ENCODE measurements at regions of chr12 and their contacts with region 1.

Region 1: DNA sequence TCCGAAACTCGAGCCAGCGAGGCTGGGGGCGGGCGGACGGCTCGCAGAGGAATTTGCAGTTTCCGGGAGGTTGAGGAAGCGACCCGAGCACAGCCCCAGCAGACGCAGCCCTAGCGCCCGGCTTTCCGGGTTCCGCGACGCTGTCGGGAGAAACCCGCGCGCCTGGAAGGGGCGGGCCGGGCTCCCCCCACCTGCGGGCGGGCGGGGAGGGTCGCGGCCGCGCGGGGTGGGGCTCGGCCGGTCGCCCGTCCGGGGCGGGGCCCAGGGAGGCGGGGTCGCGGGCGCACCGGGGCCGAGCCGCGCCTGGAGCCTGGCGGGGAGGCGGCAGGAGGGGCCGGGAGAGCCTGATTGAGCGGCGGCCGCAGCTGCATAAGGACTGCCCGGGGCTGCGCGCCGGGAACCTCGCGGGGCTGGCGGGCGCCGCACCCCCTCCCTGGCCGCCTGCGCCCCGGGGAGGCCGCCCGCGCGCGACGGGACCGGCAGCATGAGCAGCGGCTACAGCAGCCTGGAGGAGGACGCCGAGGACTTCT is at the start of gene RASSF3:
- DNase-seq: peak in 1 of 2 donors; percentile 88
- H3K4me3 ChIP-seq: peak within 1 kb of the TSS; percentile 91 to 94
- H3K27ac ChIP-seq: peak within 1 kb of the TSS; percentile 93 to 95
- H3K4me1 ChIP-seq: peaks cover 6 to 16% of the 10 kb centered on the region in 2 donors
- H3K27me3 ChIP-seq: no peaks in the 10 kb centered on the region
- CTCF ChIP-seq: peak in 1 of 3 experiments; percentile 4
- total RNA-seq, gene RASSF3: 79.6 TPM

Region 2: GRCh38 chr12:64451687-64452558 is 158.3 kb before region 1 on chr12 and contains the start of gene TBK1:
- intact Hi-C with region 1: loop called (anchors 10 kb)
- DNase-seq: peak; percentile 79 to 95
- H3K4me3 ChIP-seq: peak within 1 kb of the TSS; percentile 96 to 97
- H3K27ac ChIP-seq: peak within 1 kb of the TSS; percentile 99
- H3K4me1 ChIP-seq: peaks cover 0 to 7% of the 10 kb centered on the region in 2 donors
- H3K27me3 ChIP-seq: no peaks in the 10 kb centered on the region
- CTCF ChIP-seq: peak in 1 of 3 experiments; percentile 32
- total RNA-seq, gene TBK1: 3.9 TPM

Region 3: DNA sequence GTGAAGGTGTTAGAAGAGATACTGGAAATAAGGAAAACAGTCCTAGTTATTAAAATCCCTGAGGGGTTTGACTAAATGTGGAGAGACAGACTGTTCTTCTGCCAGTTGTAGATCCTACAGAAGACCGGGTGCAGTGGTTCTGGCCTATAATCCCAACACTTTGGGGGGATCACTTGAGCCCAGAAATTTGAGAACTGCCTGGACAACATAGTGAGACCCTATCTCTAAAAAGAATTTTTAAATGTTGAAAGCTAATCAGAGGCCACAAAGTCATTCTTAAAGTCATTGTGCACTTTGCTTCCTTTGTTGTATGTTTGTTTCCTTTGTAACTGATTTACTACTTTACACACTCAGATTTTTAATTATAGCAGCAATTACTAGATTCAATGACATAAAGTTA is 61.1 kb before region 1 on chr12:
- intact Hi-C with region 1: loop called (anchors 1 kb)
- DNase-seq: no peak
- H3K4me3 ChIP-seq: no peak overlapping the region
- H3K27ac ChIP-seq: no peak overlapping the region
- H3K4me1 ChIP-seq: peaks cover 0 to 4% of the 10 kb centered on the region in 2 donors
- H3K27me3 ChIP-seq: no peaks in the 10 kb centered on the region
- CTCF ChIP-seq: no peak

Region 4: DNA sequence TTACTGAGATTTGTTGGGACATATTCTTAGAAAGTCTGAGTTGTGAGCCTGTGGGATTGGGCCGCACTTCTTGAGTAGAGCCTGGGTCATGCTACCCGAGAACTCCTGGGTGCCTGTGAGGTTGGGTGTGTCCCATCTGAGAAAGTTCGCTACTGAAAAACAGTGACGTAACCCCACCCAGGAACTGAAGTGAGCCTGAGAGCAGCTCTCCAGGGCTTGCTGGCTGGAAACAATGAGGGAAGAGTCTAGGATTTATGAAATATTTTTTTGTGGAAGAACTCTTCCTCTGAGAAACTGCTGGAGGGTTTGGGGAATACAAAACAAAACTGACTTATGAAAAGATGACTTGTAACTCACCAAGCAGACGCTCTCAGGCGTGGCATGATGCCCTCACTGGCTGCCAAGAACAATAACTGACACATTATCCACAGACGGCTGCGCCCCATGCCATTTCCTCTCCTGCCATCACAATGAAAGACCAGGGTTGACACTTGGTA is 69.3 kb after region 1 on chr12:
- intact Hi-C with region 1: loop called (anchors 2 kb)
- DNase-seq: peak; percentile 81 to 94
- H3K4me3 ChIP-seq: peak overlapping the region in 1 of 2 donors; percentile 44
- H3K27ac ChIP-seq: peak overlapping the region; percentile 93
- H3K4me1 ChIP-seq: peaks cover 25 to 72% of the 10 kb centered on the region in 2 donors
- H3K27me3 ChIP-seq: no peaks in the 10 kb centered on the region
- CTCF ChIP-seq: no peak

Region 5: DNA sequence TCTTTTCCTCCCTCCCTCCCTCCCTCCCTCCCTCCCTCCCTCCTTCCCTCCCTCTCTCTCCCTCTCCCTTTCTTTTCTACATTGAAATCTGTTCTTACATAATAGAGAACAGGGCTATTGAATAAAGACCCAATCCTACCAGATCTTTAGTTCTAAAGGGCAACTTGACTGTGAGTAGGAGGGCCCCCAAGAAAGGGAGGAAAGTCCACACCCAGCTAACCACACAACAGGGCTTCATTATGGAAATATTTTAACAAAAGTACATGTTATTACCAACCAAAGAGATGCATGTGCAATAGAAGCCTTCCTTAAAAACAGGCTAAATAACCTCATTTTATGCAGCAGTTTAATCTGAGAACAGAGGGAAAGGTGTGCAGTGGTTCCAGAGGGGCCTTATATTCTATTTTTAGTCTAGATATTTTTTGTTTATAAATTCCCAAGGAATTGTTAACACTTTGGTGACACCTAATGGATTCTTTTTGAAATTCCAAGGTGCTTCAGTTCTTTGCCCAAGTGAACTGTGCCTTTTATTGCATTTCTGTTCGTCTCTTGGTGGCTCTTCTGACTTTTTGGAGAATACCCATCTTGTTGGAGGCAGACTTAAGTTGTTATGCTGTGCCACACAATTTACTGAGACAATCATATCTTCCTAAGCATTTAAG is 86.0 kb after region 1 on chr12:
- intact Hi-C with region 1: loop called (anchors 2 kb)
- DNase-seq: no peak
- H3K4me3 ChIP-seq: no peak overlapping the region
- H3K27ac ChIP-seq: peak overlapping the region; percentile 1 to 37
- H3K4me1 ChIP-seq: peaks cover 0 to 40% of the 10 kb centered on the region in 2 donors
- H3K27me3 ChIP-seq: no peaks in the 10 kb centered on the region
- CTCF ChIP-seq: peak in 2 of 3 experiments; percentile 27 to 44

Region 6: GRCh38 chr12:65556681-65557437 is 946.6 kb after region 1 on chr12:
- intact Hi-C with region 1: no loop called
- DNase-seq: peak; percentile 9 to 84
- H3K4me3 ChIP-seq: no peak overlapping the region
- H3K27ac ChIP-seq: no peak overlapping the region
- H3K4me1 ChIP-seq: no peaks in the 10 kb centered on the region
- H3K27me3 ChIP-seq: no peaks in the 10 kb centered on the region
- CTCF ChIP-seq: peak; percentile 59 to 95 (median 86)

Measured in ascending aorta (tissue), 2 donors.